Psoas muscle (tissue), 8 donors: ENCODE measurements at regions of chr6 and their contacts with region 1.

Region 1: DNA sequence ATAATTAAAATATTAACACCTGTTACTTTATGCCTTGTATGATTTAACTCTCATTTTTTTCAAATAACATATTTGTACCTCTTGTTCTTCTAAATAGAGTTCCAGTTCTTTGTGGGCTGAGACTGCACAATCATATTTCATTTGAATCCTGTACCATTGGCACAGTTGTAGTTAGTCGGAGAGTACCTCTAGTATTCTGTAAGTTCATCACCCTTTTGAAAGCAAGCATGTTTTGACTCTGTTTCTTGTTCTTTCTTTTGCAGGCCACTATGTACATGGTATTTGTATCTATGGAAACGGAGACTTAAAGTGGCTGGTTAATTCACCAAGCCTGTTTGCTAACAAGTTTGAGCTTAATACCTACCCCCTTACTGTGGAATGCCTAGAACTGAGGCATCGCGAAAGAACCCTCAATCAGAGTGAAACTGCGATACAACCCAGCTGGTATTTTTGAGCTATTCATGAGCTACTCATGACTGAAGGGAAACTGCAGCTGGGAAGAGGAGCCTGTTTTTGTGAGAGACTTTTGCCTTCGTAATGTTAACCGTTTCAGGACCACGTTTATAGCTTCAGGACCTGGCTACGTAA is 68.2 kb downstream of the C6orf52 start:
- DNase-seq: no peak
- ATAC-seq: no peak
- H3K4me3 ChIP-seq: no peak overlapping the region
- H3K27ac ChIP-seq: no peak overlapping the region
- H3K4me1 ChIP-seq: no peaks in the 10 kb centered on the region
- H3K27me3 ChIP-seq: no peaks in the 10 kb centered on the region
- CTCF ChIP-seq: no peak

Region 2: DNA sequence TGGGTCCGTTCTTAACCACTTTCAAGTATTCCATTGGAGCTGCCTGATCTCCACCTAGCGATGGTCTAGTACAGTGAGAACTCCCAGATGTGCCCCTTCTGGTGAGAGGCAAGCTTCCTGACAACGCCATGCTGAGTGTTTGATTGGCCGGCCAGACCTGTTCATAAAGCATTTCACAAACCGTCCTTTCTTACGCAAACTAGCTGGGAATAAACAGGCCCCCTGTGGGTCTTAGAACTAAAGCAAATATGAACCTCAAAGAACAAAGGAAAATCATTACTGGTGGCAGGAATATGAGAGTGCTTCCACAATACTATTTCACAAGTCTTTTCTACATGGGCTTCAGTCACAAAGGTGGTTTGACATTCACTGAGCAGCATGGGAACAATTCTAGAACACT is 120.7 kb before region 1 on chr6:
- intact Hi-C with region 1: loop called in 1 of 2 experiments (anchors 10 kb)
- DNase-seq: no peak
- ATAC-seq: no peak
- H3K4me3 ChIP-seq: no peak overlapping the region
- H3K27ac ChIP-seq: no peak overlapping the region
- H3K4me1 ChIP-seq: no peaks in the 10 kb centered on the region
- H3K27me3 ChIP-seq: no peaks in the 10 kb centered on the region
- CTCF ChIP-seq: no peak

Region 3: DNA sequence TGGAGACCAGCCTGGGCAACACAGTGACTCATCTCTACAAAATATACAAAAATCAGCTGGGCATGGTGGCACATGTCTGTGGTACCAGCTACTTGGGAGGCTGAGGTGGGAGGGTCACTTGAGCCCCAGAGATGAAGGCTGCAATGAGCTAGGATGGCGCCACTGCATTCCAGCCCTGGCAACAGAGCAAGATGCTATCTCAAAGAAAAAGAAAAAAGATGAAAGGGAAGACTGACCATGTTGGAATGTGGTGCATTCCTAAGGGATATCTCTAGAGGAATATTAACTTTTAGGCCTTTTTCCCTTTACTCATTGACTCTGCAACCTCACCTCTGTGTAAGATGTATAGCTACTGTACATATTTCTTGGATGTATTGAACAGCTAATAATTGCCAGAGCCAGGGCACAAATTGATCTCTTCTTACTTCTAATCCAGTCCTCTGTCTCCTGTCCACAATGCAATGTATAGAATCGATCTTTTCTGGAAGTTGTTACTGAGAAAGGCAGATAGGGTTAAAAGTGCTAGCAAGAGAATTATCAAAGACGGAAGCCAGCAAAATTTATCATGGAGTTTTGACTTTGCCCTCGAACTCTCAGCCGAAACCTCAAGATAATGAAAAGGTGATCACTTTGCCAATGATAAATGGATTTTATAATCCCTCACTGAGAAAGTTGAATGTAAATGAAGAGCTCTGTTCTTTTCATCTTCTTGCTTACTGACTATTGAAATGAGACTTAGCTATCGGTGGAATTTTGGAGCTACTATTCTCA is 58.8 kb before region 1 on chr6:
- intact Hi-C with region 1: no loop called
- DNase-seq: no peak
- ATAC-seq: no peak
- H3K4me3 ChIP-seq: no peak overlapping the region
- H3K27ac ChIP-seq: no peak overlapping the region
- H3K4me1 ChIP-seq: no peaks in the 10 kb centered on the region
- H3K27me3 ChIP-seq: no peaks in the 10 kb centered on the region
- CTCF ChIP-seq: no peak

Region 4: GRCh38 chr6:11277275-11278206 is 651.3 kb after region 1 on chr6:
- intact Hi-C with region 1: no loop called
- DNase-seq: no peak
- ATAC-seq: no peak
- H3K4me3 ChIP-seq: no peak overlapping the region
- H3K27ac ChIP-seq: no peak overlapping the region
- H3K4me1 ChIP-seq: no peaks in the 10 kb centered on the region
- H3K27me3 ChIP-seq: no peaks in the 10 kb centered on the region
- CTCF ChIP-seq: no peak